ENCODE measurements at regions of chr7 and their contacts with region 1.

Region 1: GRCh38 chr7:32846701-32847100 is 44.9 kb downstream of the KBTBD2 start:
- DNase-seq: peak; percentile 91 to 94 (median 92)
- H3K4me3 ChIP-seq: peak overlapping the region in 1 of 7 experiments; percentile 37
- H3K27ac ChIP-seq: no peak overlapping the region
- H3K4me1 ChIP-seq: peaks cover 0 to 2% (median 0%) of the 10 kb centered on the region in 4 experiments
- H3K27me3 ChIP-seq: no peaks in the 10 kb centered on the region

Region 2: DNA sequence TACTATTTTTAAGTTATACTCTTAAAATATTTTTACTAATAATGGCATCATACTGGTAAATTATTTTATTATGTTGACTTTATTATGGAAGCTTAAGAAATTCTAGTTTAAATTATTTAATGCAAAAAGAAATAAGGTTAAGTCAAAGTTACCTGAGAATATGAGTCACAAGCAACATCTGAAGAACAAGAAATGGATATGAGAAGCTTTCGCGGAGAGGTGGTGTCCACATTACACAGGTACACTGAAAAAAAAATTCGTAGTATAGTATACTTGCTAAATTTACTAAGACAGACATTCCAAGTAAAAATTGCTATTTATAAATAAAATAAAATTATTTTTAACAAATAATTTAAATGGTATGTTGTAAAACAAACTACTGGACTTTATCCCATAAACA is 207.6 kb before region 1 on chr7:
- CTCF ChIA-PET with region 1: no interaction called
- POLR2A ChIA-PET with region 1: no interaction called
- DNase-seq: no peak
- H3K4me3 ChIP-seq: no peak overlapping the region
- H3K27ac ChIP-seq: no peak overlapping the region
- H3K4me1 ChIP-seq: peaks cover 0 to 7% (median 0%) of the 10 kb centered on the region in 4 experiments
- H3K27me3 ChIP-seq: no peaks in the 10 kb centered on the region

Region 3: DNA sequence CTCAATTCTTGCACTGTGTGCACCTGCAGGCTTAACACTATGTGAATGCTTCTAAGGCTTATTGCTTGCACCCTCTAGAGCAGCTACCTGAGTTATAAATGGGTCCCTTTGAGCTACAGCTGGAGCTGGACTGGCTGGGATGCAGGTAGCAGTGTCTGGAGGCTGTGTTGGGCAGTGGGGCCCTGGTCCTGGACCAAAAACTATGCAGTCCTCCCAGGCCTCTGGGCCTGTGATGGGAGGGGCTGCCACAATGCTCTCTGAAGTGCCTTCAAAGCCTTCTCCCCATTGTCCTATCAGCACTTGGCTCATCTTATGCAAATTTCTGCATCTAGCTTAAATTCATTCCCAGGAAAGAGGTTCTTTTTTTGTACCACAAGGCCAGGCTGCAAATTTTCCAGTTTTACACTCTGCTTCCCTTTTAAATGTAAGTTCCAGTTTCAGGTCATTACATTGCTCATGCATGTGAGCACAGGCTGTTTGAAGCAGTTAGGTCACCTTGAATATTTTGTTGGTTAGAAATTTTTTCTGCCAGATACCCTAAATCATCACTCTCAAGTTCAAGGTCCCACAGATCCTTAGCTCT is 18.8 kb after region 1 on chr7:
- CTCF ChIA-PET with region 1: interaction called, 14 read pairs
- POLR2A ChIA-PET with region 1: no interaction called
- DNase-seq: no peak
- H3K4me3 ChIP-seq: no peak overlapping the region
- H3K27ac ChIP-seq: no peak overlapping the region
- H3K4me1 ChIP-seq: no peaks in the 10 kb centered on the region
- H3K27me3 ChIP-seq: no peaks in the 10 kb centered on the region

Region 4: DNA sequence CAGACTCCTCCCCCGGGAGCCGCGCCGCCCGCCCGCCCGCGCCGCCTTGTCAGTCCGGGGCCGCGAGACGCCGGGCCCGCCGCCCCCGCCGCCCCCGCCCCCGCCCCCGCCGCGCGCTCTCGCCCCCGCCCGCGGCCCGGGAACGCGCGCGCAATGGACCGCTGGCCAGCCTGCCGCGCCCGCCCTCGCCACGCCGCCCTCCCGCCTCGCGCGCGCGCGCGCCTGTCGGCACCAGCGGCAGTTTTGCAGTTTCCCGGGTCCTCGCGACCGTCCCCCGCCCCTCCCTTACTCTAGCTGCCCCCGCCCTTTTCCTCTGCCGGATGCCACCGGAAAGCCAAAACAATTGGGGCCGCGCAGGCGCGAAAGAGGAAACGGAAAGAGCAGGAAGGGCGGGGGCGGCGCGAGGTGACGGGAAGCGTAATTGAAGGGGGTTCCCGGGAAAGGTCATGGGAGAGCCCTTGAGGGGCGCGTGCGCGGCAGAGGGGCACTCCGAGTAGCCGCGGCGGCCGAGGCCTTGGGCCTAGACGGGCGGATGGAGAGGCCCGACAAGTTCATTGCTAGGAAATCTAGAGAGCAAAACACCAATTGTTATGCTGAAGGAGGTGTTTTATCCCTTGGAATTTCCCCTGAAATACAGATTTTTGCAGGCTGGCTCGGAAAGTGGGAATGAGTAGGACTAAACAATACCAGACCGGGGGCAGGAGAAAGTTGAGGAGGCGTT is 45.3 kb after region 1 on chr7:
- CTCF ChIA-PET with region 1: interaction called, 15 read pairs
- POLR2A ChIA-PET with region 1: interaction called, 3 read pairs
- DNase-seq: peak; percentile 94 to 97 (median 97)
- H3K4me3 ChIP-seq: peak overlapping the region; percentile 81 to 98 (median 92)
- H3K27ac ChIP-seq: peak overlapping the region; percentile 93 to 98
- H3K4me1 ChIP-seq: peaks cover 25 to 51% (median 32%) of the 10 kb centered on the region in 4 experiments
- H3K27me3 ChIP-seq: no peaks in the 10 kb centered on the region

Region 5: GRCh38 chr7:32942786-32943653 is 96.3 kb after region 1 on chr7:
- CTCF ChIA-PET with region 1: interaction called, 41 read pairs
- POLR2A ChIA-PET with region 1: no interaction called
- DNase-seq: peak; percentile 67 to 89 (median 78)
- H3K4me3 ChIP-seq: peak overlapping the region; percentile 57 to 93 (median 74)
- H3K27ac ChIP-seq: peak overlapping the region in 1 of 2 experiments; percentile 70
- H3K4me1 ChIP-seq: peaks cover 5 to 27% (median 19%) of the 10 kb centered on the region in 4 experiments
- H3K27me3 ChIP-seq: no peaks in the 10 kb centered on the region

Region 6: GRCh38 chr7:33050535-33051318 is 204.0 kb after region 1 on chr7:
- CTCF ChIA-PET with region 1: interaction called, 12 read pairs
- POLR2A ChIA-PET with region 1: no interaction called
- DNase-seq: peak; percentile 71 to 82 (median 75)
- H3K4me3 ChIP-seq: peak overlapping the region in 6 of 7 experiments; percentile 19 to 71 (median 55)
- H3K27ac ChIP-seq: peak overlapping the region; percentile 29 to 91
- H3K4me1 ChIP-seq: peaks cover 39 to 74% (median 55%) of the 10 kb centered on the region in 4 experiments
- H3K27me3 ChIP-seq: no peaks in the 10 kb centered on the region

Measured in common myeloid progenitor, CD34-positive (primary cell).